ENCODE measurements at regions of chr11 and their contacts with region 1.

Region 1: GRCh38 chr11:123110356-123110755 is 48.4 kb upstream of the HSPA8 start:
- DNase-seq: no peak
- ATAC-seq: no peak
- H3K4me3 ChIP-seq: no peak overlapping the region
- H3K27ac ChIP-seq: no peak overlapping the region
- H3K4me1 ChIP-seq: no peaks in the 10 kb centered on the region
- H3K27me3 ChIP-seq: peaks cover 0 to 14% of the 10 kb centered on the region in 2 experiments; a peak in 3 of 5 replicates
- CTCF ChIP-seq: no peak
- EP300 ChIP-seq: no peak
- POLR2A ChIP-seq: no peak
- RAD21 ChIP-seq: no peak

Region 2: DNA sequence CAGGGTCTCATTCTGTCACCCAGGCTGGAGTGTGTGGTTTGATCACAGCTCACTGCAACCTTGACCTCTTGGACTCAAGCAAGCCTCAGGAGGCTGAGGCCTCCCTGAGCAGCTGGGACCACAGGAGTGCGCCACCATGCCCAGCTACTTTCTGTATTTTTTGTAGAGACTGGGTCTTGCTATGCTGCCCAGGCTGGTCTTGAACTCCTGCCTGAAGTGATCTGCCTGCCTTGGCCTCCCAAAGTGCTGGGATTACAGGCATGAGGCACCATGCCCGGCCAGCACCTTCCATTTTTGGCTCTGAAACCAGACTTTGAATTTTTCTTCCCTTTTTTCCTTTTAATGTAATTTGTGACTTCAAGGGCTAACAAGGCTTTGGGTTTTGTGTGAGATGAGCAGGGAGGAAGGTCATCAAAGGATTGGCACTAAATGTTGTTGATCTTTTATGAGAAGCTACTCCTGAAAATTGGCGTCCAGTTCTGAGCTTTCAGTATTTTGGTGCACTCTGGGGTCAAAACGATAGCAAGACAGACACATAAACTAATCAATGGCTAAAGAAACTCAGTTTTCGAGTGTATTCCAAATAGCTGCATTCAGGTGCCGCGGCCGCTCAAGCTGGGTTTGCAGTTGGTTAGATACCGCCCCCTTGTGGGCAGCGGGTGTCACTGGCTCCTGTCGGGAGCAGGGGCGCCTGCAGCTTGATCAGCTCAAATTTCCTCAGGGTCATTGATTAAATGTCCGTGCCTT is 136.6 kb after region 1 on chr11:
- CTCF ChIA-PET with region 1: interaction called, 31 read pairs
- POLR2A ChIA-PET with region 1: no interaction called
- in situ Hi-C with region 1: loop called (anchors 5 kb)
- intact Hi-C with region 1: loop called (anchors 1 kb)
- DNase-seq: peak; percentile 52
- ATAC-seq: peak; percentile 96
- H3K4me3 ChIP-seq: no peak overlapping the region
- H3K27ac ChIP-seq: no peak overlapping the region
- H3K4me1 ChIP-seq: no peaks in the 10 kb centered on the region
- H3K27me3 ChIP-seq: peaks cover 2 to 10% of the 10 kb centered on the region in 2 experiments; a peak in 2 of 5 replicates
- CTCF ChIP-seq: peak; percentile 81
- EP300 ChIP-seq: no peak
- POLR2A ChIP-seq: no peak
- RAD21 ChIP-seq: peak; percentile 76

Region 3: GRCh38 chr11:123261345-123262106 is 151.2 kb after region 1 on chr11:
- CTCF ChIA-PET with region 1: interaction called, 6 read pairs
- POLR2A ChIA-PET with region 1: no interaction called
- in situ Hi-C with region 1: no loop called
- intact Hi-C with region 1: loop called (anchors 1 kb)
- DNase-seq: peak; percentile 40
- ATAC-seq: peak; percentile 98
- H3K4me3 ChIP-seq: 0 out of 6 replicates have a peak overlapping the region, but pooled peaks of 1 of the 3 experiments have one; percentile 13
- H3K27ac ChIP-seq: no peak overlapping the region
- H3K4me1 ChIP-seq: no peaks in the 10 kb centered on the region
- H3K27me3 ChIP-seq: peaks cover 4 to 17% of the 10 kb centered on the region in 2 experiments; a peak in 3 of 5 replicates
- CTCF ChIP-seq: peak; percentile 81
- EP300 ChIP-seq: no peak
- POLR2A ChIP-seq: no peak
- RAD21 ChIP-seq: no peak

Measured in HepG2 (cell line).